GM18951 (cell line): ENCODE measurements at regions of chr6 and their contacts with region 1.

Region 1: DNA sequence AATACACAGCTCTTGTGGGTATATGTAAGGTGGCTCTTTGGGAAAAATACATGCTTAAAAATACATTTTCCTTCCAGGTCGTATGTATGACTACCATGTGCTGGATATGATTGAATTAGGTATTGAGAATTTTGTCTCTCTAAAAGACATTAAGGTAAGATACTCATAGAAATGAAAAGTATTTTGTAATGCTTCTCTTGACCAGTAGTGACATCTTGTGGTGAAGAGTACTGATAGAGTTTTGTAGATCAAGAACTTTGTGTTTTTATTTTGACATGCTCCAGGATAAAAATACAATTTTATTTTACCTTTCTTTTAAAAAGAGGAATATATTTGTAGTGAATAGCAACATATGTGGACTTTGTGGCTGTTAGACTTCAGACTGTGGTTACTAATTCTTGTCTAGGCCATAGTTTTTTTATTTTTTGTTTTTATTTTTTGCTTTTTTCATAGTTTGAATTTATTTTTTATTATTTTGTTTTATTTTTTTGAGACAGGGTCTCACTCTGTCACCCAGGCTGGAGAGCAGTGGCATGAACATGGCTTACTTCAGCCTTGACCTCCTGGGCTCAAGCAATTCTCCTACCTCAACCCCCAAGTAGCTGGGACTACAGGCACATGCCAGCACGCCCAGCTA is 17.9 kb downstream of the RPF2 start:
- POLR2A ChIP-seq: no peak

Region 2: DNA sequence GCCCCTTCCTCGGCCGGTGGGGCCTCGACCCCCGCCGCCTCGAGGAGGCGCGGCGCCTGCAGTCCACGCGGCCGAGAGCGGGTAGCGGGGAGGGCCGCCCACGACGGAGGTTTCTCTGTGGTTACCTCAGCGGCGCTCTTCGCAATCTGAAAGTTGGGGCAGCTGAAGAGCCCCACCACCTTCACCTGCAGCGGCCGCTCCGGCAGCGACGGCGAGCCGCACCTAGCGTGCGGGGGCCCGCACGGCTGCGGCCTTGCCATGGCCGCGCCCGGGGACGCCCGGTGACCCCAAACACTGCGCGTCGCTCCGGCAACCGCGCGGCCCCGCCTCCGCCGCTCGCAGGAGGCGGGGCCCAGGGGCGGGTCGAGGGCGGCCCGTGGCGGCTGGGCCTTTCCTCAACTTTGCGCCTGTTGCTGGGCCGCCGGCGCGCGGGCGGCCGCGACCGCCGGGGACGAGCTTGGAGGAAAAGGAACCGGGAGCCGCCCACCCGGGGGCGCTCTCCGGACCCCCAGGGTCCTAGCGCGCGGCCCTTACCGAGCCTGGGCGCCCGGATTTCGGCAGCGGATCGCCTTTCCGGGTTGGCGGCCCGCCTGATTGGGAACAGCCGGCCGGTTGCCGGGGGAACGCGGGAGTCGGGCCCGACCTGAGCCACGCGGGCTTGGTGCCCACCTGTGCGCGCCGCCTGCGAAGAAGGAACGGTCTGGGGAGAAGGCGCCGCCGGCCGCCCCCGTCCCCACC is 1559.3 kb before region 1 on chr6 and contains the starts of genes PPIL6 and SMPD2:
- in situ Hi-C with region 1: no loop called
- POLR2A ChIP-seq: peak; percentile 63

Region 3: GRCh38 chr6:110534731-110535492 is 464.8 kb before region 1 on chr6:
- in situ Hi-C with region 1: loop called (anchors 5 kb)
- POLR2A ChIP-seq: no peak